ENCODE measurements at regions of chr6 and their contacts with region 1.

Region 1: DNA sequence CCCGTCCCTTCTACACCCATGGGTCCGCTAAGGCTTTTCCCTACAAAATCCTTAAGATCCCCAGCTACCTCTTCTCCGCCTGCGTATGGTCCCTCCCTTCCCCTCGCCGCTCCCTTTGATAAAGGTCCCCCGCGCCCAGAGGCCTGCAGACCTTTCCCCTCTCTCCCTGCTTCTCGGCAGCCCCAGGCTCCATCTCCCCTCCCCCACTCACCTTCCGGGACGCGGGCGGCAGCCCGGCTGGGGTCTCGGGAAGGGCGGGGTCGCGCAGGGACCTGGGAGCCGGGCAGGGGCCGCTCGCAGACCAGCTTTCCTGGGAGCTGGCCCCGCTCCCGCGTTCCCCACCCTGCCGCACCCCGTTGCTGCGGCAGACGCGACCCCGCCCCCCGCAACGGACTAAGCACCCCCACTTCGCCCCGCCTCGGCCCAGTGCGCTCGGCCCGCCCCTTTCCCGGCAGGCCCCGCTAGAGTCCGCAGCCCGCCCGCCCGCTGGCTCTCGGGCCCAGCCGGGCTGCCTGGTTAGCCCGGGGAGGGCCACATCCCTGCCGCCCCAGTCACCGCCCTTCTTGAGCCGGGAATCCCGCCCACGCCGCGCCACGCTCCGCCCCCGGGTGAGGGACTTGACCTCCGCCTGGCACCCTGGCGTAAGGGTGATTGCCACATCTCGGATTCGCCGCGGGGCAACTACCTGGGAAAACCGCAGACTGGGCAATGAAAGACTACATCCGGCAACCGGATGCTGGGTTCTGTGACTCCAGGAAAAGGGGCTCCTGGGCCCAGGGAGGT is at the start of gene FLOT1:
- DNase-seq: no peak
- H3K4me3 ChIP-seq: peak within 1 kb of the TSS; percentile 99
- CTCF ChIP-seq: no peak

Region 2: DNA sequence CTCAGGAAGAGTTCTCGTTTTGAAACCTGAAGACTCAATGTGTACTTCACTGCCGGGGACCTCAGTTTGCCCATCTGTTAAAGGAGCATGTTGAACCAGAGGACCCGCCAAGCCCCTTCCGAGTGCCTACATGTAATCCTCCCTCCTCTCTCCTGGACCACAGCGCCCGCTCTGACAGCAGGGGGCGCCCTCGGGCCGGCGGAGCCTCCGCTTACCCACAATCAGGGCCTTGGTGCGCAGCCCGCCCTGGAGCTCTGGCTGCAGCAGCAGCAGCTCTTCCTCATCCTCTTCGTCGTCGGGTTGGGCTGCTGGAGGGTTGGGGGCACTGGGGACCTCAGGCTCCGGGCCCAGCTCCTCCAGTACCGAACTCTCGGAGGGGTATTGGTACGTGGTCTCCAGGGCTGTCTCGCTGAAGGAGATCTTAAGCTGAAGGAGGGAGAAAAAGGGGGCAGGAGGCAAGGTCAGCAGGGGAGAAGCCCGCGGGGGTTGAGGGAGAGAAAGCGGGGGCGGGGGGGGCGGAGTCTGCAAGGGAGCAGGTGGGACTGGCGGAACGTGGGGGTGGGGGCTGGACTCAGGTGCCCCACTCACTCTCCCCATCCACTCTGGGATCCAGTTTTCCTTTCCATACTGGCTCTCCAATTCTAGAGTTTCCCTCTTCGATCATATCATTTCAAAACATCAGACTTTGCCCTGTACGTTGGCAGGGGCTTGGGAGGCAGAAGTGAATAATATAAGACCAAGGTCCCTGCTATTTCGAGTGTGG is 63.4 kb before region 1 on chr6:
- CTCF ChIA-PET with region 1: interaction called, 17 read pairs
- POLR2A ChIA-PET with region 1: interaction called, 4 read pairs
- DNase-seq: no peak
- H3K4me3 ChIP-seq: peak overlapping the region; percentile 35
- CTCF ChIP-seq: peak; percentile 94

Region 3: DNA sequence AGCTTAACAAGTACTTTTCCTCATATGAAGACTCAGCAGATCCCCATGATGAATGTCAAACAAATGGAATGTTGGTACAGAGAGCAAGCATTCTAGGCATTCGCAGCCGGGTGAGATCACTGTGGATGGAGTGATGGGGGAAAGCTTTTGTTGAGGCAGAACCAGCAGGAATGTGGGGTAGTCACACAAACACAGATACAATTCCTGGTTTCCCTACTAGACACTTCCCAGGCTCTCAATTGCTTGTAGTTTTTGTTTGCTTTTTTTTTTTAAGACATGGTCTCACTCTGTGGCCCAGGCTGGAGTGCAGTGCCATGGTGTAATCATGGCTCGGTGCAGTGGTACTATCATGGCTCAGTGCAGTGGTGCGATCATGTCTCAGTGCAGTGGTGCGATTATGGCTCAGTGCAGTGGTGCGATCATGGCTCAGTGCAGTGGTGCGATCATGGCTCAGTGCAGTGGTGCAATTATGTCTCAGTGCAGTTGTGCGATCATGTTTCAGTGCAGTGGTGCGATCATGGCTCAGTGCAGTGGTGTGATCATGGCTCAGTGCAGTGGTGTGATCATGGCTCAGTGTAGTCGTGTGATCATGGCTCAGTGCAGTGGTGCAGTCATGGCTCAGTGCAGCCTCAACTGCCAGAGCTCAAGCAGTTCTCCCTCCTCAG is 17.2 kb after region 1 on chr6:
- CTCF ChIA-PET with region 1: interaction called, 3 read pairs
- POLR2A ChIA-PET with region 1: interaction called, 14 read pairs
- DNase-seq: peak; percentile 98
- H3K4me3 ChIP-seq: no peak overlapping the region
- CTCF ChIP-seq: no peak

Region 4: DNA sequence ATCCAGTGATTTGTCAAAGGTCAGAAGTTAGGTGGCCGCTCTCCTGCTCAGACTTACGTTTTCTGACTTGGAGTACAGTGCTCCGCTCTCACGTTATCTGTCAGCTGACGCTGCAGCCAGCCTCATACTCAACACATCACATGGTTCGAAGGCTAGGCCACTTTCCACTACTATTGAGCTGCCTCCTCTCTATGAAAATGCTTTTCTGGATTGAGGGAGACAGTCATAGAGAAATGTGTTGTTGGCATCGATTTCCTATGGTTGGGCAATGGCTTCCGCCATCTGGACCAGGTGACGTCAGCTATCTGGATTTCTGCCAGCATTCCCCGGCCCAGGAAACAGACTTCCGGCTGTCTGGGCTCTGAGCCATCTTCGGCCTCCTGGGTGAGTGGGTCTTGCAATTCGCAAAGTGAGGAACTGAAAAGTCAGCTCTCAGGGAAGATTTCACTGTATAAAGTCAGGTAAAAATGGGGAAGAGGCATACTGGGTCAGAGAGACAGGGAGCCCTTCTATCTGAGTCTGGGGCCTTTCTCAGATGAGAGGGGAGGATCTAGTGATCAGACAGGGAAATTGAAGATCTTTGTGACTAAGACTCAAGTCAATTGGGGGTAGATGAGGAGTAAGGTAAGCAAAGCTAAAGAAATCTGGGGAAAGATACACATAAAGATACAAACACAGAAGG is 39.4 kb after region 1 on chr6:
- CTCF ChIA-PET with region 1: no interaction called
- POLR2A ChIA-PET with region 1: interaction called, 47 read pairs
- DNase-seq: peak; percentile 97
- H3K4me3 ChIP-seq: no peak overlapping the region
- CTCF ChIP-seq: no peak

Region 5: DNA sequence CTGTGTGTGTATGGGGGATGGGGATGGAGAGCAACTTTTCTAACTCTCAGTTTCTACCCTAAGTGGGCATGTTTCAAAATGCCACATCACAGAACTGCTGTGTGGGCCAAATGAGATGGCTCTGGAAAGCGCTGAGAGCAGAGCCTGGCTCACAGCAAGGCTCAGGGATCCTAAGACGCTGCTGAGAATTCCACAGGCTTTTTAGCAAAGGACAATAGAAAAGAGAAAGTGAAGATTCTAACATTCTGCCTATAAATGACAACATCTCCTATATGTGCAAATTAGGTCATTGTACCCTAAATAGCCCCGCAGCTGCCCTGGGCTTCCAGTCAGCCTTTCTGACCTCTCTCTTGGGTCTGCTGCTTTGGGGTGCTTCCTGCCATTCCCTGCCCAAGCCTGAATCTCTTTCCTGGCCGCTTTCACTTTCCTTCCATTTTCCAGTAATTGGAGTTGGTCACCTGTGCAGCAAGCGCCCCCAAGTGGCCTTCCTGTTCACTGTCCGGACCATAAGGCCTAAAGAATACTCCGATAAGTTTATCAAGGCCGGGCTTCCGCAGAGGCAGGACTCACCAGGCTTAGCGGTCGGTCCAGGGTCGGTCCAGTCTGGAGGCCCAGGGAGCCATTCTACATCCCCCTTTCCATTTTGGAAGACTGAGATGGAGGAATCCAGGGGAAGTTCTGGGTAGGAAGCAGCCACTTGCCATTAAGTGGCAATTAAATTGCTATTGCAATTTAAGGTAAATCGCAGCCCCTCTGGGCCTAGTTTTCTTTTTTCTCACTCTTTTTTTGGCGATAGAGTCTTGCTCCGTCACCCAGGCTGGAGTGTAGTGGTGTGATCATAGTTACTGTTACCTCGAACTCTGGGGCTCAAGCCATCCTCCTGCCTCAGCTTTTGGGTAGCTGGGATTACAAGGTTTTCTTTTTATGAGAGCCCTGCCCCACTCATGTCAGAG is 135.2 kb after region 1 on chr6:
- CTCF ChIA-PET with region 1: interaction called, 10 read pairs
- POLR2A ChIA-PET with region 1: interaction called, 9 read pairs
- DNase-seq: peak; percentile 62
- H3K4me3 ChIP-seq: peak overlapping the region; percentile 39
- CTCF ChIP-seq: peak; percentile 85